Activated CD8-positive, alpha-beta T cell treated with anti-CD3 and anti-CD28 coated beads for 36 hours (primary cell): ENCODE measurements at regions of chr3 and their contacts with region 1.

Region 1: GRCh38 chr3:15051531-15051930 is 13.6 kb downstream of the MRPS25 start:
- DNase-seq: peak; percentile 69
- ATAC-seq: peak; percentile 78
- H3K4me3 Mint-ChIP-seq: no peak overlapping the region
- H3K27ac Mint-ChIP-seq: peak overlapping the region; percentile 38
- H3K4me1 Mint-ChIP-seq: peaks cover 51% of the 10 kb centered on the region
- H3K27me3 Mint-ChIP-seq: no peaks in the 10 kb centered on the region
- CTCF ChIP-seq: peak; percentile 65

Region 2: GRCh38 chr3:15064835-15065549 is 13.5 kb after region 1 on chr3 and contains the start of gene MRPS25:
- CTCF ChIA-PET with region 1: interaction called, 14 read pairs
- POLR2A ChIA-PET with region 1: interaction called, 10 read pairs
- intact Hi-C with region 1: no loop called
- DNase-seq: peak; percentile 94
- ATAC-seq: peak; percentile 99
- H3K4me3 Mint-ChIP-seq: peak within 1 kb of the TSS; percentile 96
- H3K27ac Mint-ChIP-seq: peak within 1 kb of the TSS; percentile 97
- H3K4me1 Mint-ChIP-seq: peaks cover 16% of the 10 kb centered on the region
- H3K27me3 Mint-ChIP-seq: no peaks in the 10 kb centered on the region
- CTCF ChIP-seq: no peak
- total RNA-seq, gene MRPS25: 73.9 to 78.2 TPM

Region 3: DNA sequence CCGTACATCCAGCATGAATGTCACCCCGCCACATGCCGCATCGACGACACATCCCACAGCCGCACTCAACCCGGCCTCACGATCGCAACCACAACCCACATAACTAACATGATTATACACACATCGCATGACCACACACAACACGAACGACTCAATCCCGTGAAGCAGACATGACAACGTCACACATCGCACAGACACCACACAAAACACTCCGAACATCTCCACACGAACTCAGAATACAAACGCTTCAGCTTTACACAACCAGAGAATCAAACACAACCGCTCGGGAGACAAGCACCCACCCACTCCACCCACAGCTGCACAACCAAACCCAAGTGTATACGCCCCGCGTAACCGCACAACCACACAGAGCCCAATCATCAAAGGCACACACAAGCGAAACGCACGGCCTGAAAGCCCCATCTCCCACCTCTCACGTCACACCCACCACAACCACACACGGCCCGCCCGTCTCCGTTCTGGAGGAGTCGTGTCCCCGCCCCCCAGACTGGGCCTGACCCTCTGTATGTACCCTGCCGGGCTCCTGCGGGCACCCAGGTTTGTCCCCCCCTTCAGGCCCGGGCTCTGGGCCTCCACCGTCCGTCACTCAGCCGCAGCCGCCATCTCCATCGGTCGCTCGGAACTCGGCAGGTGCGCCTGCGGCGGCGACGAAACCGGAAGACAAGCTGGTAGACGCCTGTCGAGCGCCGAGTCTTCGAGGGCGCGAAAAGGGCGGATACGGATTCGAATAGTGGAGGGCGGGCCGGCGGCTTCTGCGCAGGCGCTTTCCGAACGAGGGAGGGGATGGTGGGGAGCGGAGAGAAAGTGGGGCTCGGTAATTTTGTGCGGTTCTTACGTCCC is 47.2 kb after region 1 on chr3 and contains the start of gene RBSN:
- CTCF ChIA-PET with region 1: interaction called, 5 read pairs
- POLR2A ChIA-PET with region 1: interaction called, 4 read pairs
- intact Hi-C with region 1: loop called (anchors 2 kb)
- DNase-seq: peak; percentile 98
- ATAC-seq: peak; percentile 90
- H3K4me3 Mint-ChIP-seq: peak within 1 kb of the TSS; percentile 90
- H3K27ac Mint-ChIP-seq: peak within 1 kb of the TSS; percentile 96
- H3K4me1 Mint-ChIP-seq: peaks cover 16% of the 10 kb centered on the region
- H3K27me3 Mint-ChIP-seq: peaks cover 2% of the 10 kb centered on the region
- CTCF ChIP-seq: no peak
- total RNA-seq, gene RBSN: 11.3 to 11.8 TPM